Activated CD8-positive, alpha-beta T cell treated with anti-CD3 and anti-CD28 coated beads for 36 hours (primary cell): ENCODE measurements at regions of chr7 and their contacts with region 1.

Region 1: DNA sequence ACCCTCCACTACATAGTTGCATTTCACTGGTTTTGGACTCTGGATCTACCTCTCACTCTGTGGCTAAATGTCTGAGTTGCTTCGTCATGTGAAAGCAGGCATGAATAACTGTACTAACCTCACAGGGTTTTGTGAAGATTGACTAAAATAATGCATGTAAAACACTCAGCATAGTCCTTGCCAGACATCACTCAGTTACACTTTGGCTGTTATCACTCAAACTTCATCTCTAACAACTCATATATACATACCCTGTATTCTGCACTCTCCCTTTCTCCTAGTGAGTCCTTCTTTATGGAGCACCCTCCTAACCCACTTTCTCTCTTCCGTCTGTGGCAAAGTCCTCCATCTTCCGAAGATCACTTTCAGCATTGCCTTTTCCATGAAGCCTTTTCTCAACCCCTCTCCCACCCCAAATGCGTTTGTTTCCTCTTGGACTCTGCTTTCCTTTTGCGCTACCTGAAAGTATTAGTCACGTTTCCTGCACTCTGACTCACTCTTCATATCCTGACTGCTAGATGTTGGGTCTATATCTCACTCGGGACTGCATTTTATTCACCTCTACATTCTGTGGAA is 72.6 kb downstream of the OSBPL3 start:
- DNase-seq: peak; percentile 43
- ATAC-seq: peak; percentile 73
- H3K4me3 Mint-ChIP-seq: no peak overlapping the region
- H3K27ac Mint-ChIP-seq: no peak overlapping the region
- H3K4me1 Mint-ChIP-seq: peaks cover 51% of the 10 kb centered on the region
- H3K27me3 Mint-ChIP-seq: no peaks in the 10 kb centered on the region
- CTCF ChIP-seq: no peak

Region 2: GRCh38 chr7:24434972-24435371 is 472.4 kb before region 1 on chr7:
- CTCF ChIA-PET with region 1: no interaction called
- POLR2A ChIA-PET with region 1: no interaction called
- intact Hi-C with region 1: no loop called
- DNase-seq: no peak
- ATAC-seq: no peak
- H3K4me3 Mint-ChIP-seq: no peak overlapping the region
- H3K27ac Mint-ChIP-seq: no peak overlapping the region
- H3K4me1 Mint-ChIP-seq: no peaks in the 10 kb centered on the region
- H3K27me3 Mint-ChIP-seq: no peaks in the 10 kb centered on the region
- CTCF ChIP-seq: no peak

Region 3: GRCh38 chr7:24871770-24872169 is 35.6 kb before region 1 on chr7:
- CTCF ChIA-PET with region 1: no interaction called
- POLR2A ChIA-PET with region 1: no interaction called
- intact Hi-C with region 1: loop called (anchors 5 kb)
- DNase-seq: no peak
- ATAC-seq: no peak
- H3K4me3 Mint-ChIP-seq: no peak overlapping the region
- H3K27ac Mint-ChIP-seq: no peak overlapping the region
- H3K4me1 Mint-ChIP-seq: peaks cover 25% of the 10 kb centered on the region
- H3K27me3 Mint-ChIP-seq: no peaks in the 10 kb centered on the region
- CTCF ChIP-seq: no peak

Region 4: GRCh38 chr7:24877790-24878311 is 29.5 kb before region 1 on chr7:
- CTCF ChIA-PET with region 1: no interaction called
- POLR2A ChIA-PET with region 1: interaction called, 11 read pairs
- intact Hi-C with region 1: loop called (anchors 5 kb)
- DNase-seq: peak; percentile 67
- ATAC-seq: peak; percentile 95
- H3K4me3 Mint-ChIP-seq: peak overlapping the region; percentile 34
- H3K27ac Mint-ChIP-seq: peak overlapping the region; percentile 79
- H3K4me1 Mint-ChIP-seq: peaks cover 37% of the 10 kb centered on the region
- H3K27me3 Mint-ChIP-seq: no peaks in the 10 kb centered on the region
- CTCF ChIP-seq: no peak

Region 5: DNA sequence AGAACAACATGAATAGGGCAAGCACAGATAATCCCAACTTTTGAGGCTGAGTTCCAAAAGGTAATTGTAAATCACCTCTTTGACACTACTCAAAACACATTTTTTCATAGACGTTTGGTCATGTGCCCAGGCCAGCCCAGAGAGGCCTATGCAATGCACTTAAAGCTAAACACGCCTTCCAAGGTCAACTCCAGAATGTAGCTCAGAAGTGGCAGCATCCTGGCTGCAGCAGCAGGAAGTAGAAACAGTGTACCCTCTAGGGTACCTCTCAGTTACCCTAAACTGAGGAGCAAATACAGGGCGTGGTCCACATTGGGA is 13.9 kb after region 1 on chr7:
- CTCF ChIA-PET with region 1: interaction called, 4 read pairs
- POLR2A ChIA-PET with region 1: interaction called, 8 read pairs
- intact Hi-C with region 1: loop called (anchors 2 kb)
- DNase-seq: peak; percentile 39
- ATAC-seq: peak; percentile 40
- H3K4me3 Mint-ChIP-seq: peak overlapping the region; percentile 36
- H3K27ac Mint-ChIP-seq: peak overlapping the region; percentile 89
- H3K4me1 Mint-ChIP-seq: peaks cover 85% of the 10 kb centered on the region
- H3K27me3 Mint-ChIP-seq: no peaks in the 10 kb centered on the region
- CTCF ChIP-seq: no peak

Region 6: GRCh38 chr7:24965831-24966709 is 58.7 kb after region 1 on chr7:
- CTCF ChIA-PET with region 1: interaction called, 3 read pairs
- POLR2A ChIA-PET with region 1: no interaction called
- intact Hi-C with region 1: loop called (anchors 5 kb)
- DNase-seq: peak; percentile 68
- ATAC-seq: peak; percentile 87
- H3K4me3 Mint-ChIP-seq: peak overlapping the region; percentile 6
- H3K27ac Mint-ChIP-seq: peak overlapping the region; percentile 48
- H3K4me1 Mint-ChIP-seq: peaks cover 77% of the 10 kb centered on the region
- H3K27me3 Mint-ChIP-seq: no peaks in the 10 kb centered on the region
- CTCF ChIP-seq: no peak

Region 7: GRCh38 chr7:25028370-25029021 is 121.1 kb after region 1 on chr7:
- CTCF ChIA-PET with region 1: no interaction called
- POLR2A ChIA-PET with region 1: no interaction called
- intact Hi-C with region 1: loop called (anchors 5 kb)
- DNase-seq: peak; percentile 48
- ATAC-seq: peak; percentile 78
- H3K4me3 Mint-ChIP-seq: no peak overlapping the region
- H3K27ac Mint-ChIP-seq: peak overlapping the region; percentile 92
- H3K4me1 Mint-ChIP-seq: peaks cover 42% of the 10 kb centered on the region
- H3K27me3 Mint-ChIP-seq: no peaks in the 10 kb centered on the region
- CTCF ChIP-seq: no peak

Region 8: GRCh38 chr7:25069900-25070443 is 162.6 kb after region 1 on chr7:
- CTCF ChIA-PET with region 1: interaction called, 3 read pairs
- POLR2A ChIA-PET with region 1: no interaction called
- intact Hi-C with region 1: loop called (anchors 10 kb)
- DNase-seq: peak; percentile 54
- ATAC-seq: peak; percentile 71
- H3K4me3 Mint-ChIP-seq: no peak overlapping the region
- H3K27ac Mint-ChIP-seq: no peak overlapping the region
- H3K4me1 Mint-ChIP-seq: peaks cover 9% of the 10 kb centered on the region
- H3K27me3 Mint-ChIP-seq: peaks cover 2% of the 10 kb centered on the region
- CTCF ChIP-seq: peak; percentile 96